PC-9 (cell line): ENCODE measurements at regions of chr3 and their contacts with region 1.

Region 1: GRCh38 chr3:185696039-185696438 is 109.9 kb downstream of the SENP2 start:
- DNase-seq: no peak
- H3K4me3 ChIP-seq: no peak overlapping the region
- H3K27ac ChIP-seq: no peak overlapping the region
- H3K4me1 ChIP-seq: peaks cover 3% of the 10 kb centered on the region; the same call in 1 of the 2 replicates
- H3K27me3 ChIP-seq: no peaks in the 10 kb centered on the region
- CTCF ChIP-seq: no peak

Region 2: DNA sequence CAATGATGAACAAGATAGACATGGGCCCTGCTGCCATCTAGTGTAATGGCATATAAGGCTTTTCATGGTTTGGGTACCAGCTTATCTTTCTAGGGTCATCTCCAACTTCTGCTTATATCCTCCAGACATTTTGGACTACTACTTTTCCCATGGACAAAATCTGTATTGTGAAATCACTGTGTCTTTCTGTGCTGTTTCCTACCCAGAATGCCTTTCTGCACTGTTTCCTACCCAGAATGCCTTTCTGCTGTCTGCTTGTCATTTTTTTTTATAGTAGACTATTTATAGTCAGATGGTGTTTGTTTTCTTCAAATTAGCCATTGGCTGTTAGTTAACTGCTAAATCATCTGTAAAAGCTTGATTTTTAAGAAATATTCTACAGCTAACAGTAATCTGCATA is 864.0 kb before region 1 on chr3:
- CTCF ChIA-PET with region 1: no interaction called
- POLR2A ChIA-PET with region 1: no interaction called
- intact Hi-C with region 1: no loop called
- DNase-seq: no peak
- H3K4me3 ChIP-seq: no peak overlapping the region
- H3K27ac ChIP-seq: no peak overlapping the region
- H3K4me1 ChIP-seq: no peaks in the 10 kb centered on the region
- H3K27me3 ChIP-seq: no peaks in the 10 kb centered on the region
- CTCF ChIP-seq: no peak

Region 3: DNA sequence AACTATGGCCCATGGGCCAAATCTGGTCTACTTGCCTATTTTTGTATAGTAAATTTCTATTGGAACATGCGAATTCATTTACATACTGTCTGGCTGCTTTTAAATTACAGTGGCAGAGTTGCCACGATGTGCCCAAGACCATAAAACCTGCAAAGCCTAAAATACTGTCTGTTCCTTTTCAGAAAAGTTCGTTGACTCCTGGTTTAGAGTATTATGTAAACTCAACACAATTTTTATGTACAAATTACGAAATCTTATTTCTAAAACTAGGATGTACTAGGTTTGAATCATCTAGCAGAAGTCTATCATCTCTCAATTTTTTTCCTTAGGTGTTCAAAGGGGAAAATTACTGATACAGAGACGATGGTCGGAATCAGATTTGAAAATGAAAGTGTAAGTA is 83.0 kb before region 1 on chr3:
- CTCF ChIA-PET with region 1: no interaction called
- POLR2A ChIA-PET with region 1: no interaction called
- intact Hi-C with region 1: no loop called
- DNase-seq: no peak
- H3K4me3 ChIP-seq: no peak overlapping the region
- H3K27ac ChIP-seq: no peak overlapping the region
- H3K4me1 ChIP-seq: no peaks in the 10 kb centered on the region
- H3K27me3 ChIP-seq: no peaks in the 10 kb centered on the region
- CTCF ChIP-seq: no peak

Region 4: GRCh38 chr3:185715091-185715490 is 19.1 kb after region 1 on chr3:
- CTCF ChIA-PET with region 1: interaction called, 11 read pairs
- POLR2A ChIA-PET with region 1: no interaction called
- intact Hi-C with region 1: no loop called
- DNase-seq: peak; percentile 34 to 77
- H3K4me3 ChIP-seq: 0 out of 2 replicates have a peak overlapping the region, but pooled peaks have one; percentile 17
- H3K27ac ChIP-seq: peak overlapping the region; percentile 53
- H3K4me1 ChIP-seq: peaks cover 37% of the 10 kb centered on the region
- H3K27me3 ChIP-seq: no peaks in the 10 kb centered on the region
- CTCF ChIP-seq: no peak